ENCODE measurements at regions of chr5 and their contacts with region 1.

Region 1: GRCh38 chr5:136174021-136174659 is 18.8 kb downstream of the SMIM32 start:
- DNase-seq: no peak
- H3K4me3 Mint-ChIP-seq: no peak overlapping the region
- H3K27ac Mint-ChIP-seq: no peak overlapping the region
- H3K4me1 Mint-ChIP-seq: no peaks in the 10 kb centered on the region
- H3K27me3 Mint-ChIP-seq: no peaks in the 10 kb centered on the region

Region 2: DNA sequence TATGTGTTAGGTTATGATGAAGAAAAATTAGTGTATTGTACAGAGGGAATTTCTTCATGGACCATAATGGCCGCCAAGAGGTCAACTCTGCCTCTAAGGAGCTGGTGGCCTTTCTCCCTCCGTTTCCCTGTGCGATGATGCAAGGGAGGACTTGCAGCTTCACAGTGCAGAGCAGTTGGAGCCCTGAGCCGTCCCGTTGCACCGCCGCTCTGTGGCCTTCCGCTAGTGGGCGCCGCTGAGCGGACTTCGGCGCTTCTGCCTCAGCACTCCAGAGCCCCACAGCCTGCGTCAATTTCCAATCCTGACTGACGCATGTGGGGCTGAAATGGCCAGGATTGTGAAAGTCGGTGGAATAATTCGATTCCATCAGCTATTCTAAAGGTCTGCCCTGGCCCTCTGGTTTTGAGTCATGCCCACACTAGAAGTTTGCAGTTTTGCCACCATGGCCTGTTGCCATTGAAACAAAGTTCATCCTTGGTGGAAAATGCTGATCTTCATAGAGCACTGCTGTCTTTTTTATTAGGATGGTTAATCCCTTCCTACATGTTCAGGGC is 196.7 kb before region 1 on chr5:
- intact Hi-C with region 1: loop called (anchors 2 kb)
- DNase-seq: no peak
- H3K4me3 Mint-ChIP-seq: no peak overlapping the region
- H3K27ac Mint-ChIP-seq: no peak overlapping the region
- H3K4me1 Mint-ChIP-seq: no peaks in the 10 kb centered on the region
- H3K27me3 Mint-ChIP-seq: peaks cover 15% of the 10 kb centered on the region

Region 3: GRCh38 chr5:136132557-136133221 is 41.5 kb before region 1 on chr5 and contains the start of gene SMAD5:
- intact Hi-C with region 1: loop called (anchors 2 kb)
- DNase-seq: peak; percentile 78
- H3K4me3 Mint-ChIP-seq: peak within 1 kb of the TSS; percentile 89
- H3K27ac Mint-ChIP-seq: peak within 1 kb of the TSS; percentile 68
- H3K4me1 Mint-ChIP-seq: peaks cover 20% of the 10 kb centered on the region
- H3K27me3 Mint-ChIP-seq: peaks cover 50% of the 10 kb centered on the region
- total RNA-seq, gene SMAD5: 17.9 TPM in 2 replicates

Region 4: DNA sequence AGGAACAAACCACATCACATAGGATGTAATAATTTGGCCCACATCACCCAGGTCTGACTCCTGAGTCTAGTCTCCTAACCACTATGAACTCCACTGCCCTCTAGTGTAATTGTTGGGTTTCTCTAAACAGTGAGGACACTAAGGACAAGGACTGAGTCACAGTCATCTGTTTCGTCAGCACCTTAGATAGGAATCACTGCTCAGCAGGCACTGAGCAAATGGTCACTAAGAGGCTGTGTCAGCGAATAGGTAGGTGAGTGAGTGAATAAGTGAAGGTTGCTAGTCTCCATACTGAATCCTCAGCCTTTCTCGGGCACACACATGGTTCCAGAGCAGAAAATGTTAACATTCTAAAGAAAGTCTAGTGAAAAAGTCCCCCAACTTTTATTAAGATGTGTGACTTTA is 1046.4 kb after region 1 on chr5:
- intact Hi-C with region 1: no loop called
- DNase-seq: no peak
- H3K4me3 Mint-ChIP-seq: no peak overlapping the region
- H3K27ac Mint-ChIP-seq: no peak overlapping the region
- H3K4me1 Mint-ChIP-seq: no peaks in the 10 kb centered on the region
- H3K27me3 Mint-ChIP-seq: peaks cover 5% of the 10 kb centered on the region

Measured in activated T-helper 1 cell treated with anti-CD3 and anti-CD28 coated beads, Interleukin-12 subunit alpha, Interleukin-12 subunit beta, Interleukin-2, Interleukin-4 antibody, amounts not matched to agents 30 ng/mL and 10 ng/mL and 1 ng/mL, durations not matched to agents 14 hours and 24 hours and 36 hours (primary cell).